HEK293T (cell line): ENCODE measurements at regions of chr2 and their contacts with region 1.

Region 1: DNA sequence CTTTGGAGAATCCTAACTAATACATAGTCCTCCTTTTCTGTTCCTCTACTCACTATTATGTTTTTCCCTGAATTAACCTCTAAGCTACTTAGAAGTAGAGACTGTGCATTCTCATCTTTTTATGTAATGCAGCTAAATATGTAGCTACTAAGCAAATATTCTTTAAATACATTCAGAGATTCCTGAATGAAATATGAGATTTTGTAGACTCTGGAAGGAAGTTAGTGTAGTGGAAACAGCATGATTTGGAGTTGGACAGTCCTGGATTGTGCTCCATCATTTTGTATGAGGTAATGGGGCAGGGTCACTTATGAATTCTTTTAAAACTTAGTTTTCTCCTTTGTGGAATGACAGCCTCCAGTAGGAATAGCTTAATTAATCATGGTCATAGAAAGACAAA is 24.7 kb upstream of the NT5C1B start:
- DNase-seq: no peak

Region 2: GRCh38 chr2:18520451-18521425 is 93.3 kb before region 1 on chr2:
- CTCF ChIA-PET with region 1: interaction called, 10 read pairs
- POLR2A ChIA-PET with region 1: no interaction called
- DNase-seq: peak; percentile 77